ENCODE measurements at regions of chr5 and their contacts with region 1.

Region 1: GRCh38 chr5:90866333-90866732 is 307.7 kb downstream of the ADGRV1 start:
- DNase-seq: no peak
- H3K4me3 ChIP-seq: no peak overlapping the region
- H3K27ac ChIP-seq: no peak overlapping the region
- H3K4me1 ChIP-seq: no peaks in the 10 kb centered on the region
- H3K27me3 ChIP-seq: no peaks in the 10 kb centered on the region
- CTCF ChIP-seq: peak in 3 of 4 experiments; percentile 42 to 70 (median 59)
- POLR2A ChIP-seq: no peak

Region 2: GRCh38 chr5:90911169-90911568 is 44.8 kb after region 1 on chr5:
- intact Hi-C with region 1: no loop called
- DNase-seq: no peak
- H3K4me3 ChIP-seq: no peak overlapping the region
- H3K27ac ChIP-seq: no peak overlapping the region
- H3K4me1 ChIP-seq: no peaks in the 10 kb centered on the region
- H3K27me3 ChIP-seq: no peaks in the 10 kb centered on the region
- CTCF ChIP-seq: no peak
- POLR2A ChIP-seq: no peak

Region 3: DNA sequence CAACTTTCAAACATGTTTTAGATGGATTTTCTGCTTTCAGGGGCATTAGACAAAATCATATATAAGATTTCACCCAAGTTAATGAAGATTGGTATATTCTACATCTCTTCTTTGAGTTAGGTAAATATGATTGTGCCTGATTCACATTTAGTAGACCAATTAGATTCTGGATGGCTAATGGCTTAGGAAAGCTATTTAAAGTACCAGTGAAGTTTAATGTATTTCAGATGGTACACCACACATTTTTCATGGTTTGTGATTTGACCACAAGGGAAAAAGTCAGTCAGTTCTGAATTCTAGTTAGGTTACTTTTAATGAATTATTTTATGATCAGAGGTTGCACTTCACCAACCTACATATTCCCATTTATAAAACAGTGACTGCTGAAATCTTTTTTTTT is 102.0 kb after region 1 on chr5:
- intact Hi-C with region 1: no loop called
- DNase-seq: no peak
- H3K4me3 ChIP-seq: no peak overlapping the region
- H3K27ac ChIP-seq: no peak overlapping the region
- H3K4me1 ChIP-seq: no peaks in the 10 kb centered on the region
- H3K27me3 ChIP-seq: no peaks in the 10 kb centered on the region
- CTCF ChIP-seq: no peak
- POLR2A ChIP-seq: no peak

Region 4: DNA sequence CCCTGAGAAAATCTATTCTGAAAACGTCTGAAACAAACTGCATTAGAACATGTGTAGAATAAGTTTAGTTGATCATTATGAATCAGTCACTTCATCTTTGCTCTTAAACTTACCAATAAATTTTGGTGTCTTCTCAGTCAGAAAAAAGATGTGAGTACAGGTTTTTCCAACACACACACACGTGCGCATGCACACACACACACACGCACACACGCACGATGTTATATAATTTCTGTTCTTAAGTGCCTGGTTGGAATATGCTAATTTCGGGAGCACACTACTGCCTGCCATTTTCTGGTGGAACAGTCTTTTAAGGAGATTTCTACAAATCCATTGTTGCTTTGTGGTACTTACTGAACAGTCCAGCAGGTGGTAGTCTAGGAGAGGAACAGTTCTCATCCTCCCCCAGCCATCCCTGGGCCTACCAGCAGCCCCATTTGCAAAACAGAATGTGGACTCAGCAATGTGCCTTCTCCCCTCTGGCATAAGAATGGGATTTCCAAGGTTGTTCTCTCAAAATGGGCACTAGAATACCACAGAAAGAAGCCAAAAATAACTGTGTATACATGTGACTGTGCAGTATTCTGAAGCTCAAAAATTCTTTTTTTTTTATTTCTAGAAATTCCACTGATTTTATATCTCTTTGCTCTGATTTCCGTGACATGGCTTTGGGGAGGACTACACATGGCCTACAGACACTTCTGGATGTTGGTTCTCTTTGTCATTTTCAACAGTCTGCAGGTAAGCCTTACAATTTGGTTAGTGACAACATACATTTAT is 235.5 kb after region 1 on chr5:
- intact Hi-C with region 1: loop called (anchors 5 kb)
- DNase-seq: peak; percentile 76
- H3K4me3 ChIP-seq: no peak overlapping the region
- H3K27ac ChIP-seq: no peak overlapping the region
- H3K4me1 ChIP-seq: no peaks in the 10 kb centered on the region
- H3K27me3 ChIP-seq: no peaks in the 10 kb centered on the region
- CTCF ChIP-seq: peak; percentile 60 to 90 (median 86)
- POLR2A ChIP-seq: no peak

Region 5: GRCh38 chr5:91419571-91420537 is 553.5 kb after region 1 on chr5:
- intact Hi-C with region 1: loop called (anchors 5 kb)
- DNase-seq: peak; percentile 40
- H3K4me3 ChIP-seq: no peak overlapping the region
- H3K27ac ChIP-seq: no peak overlapping the region
- H3K4me1 ChIP-seq: no peaks in the 10 kb centered on the region
- H3K27me3 ChIP-seq: no peaks in the 10 kb centered on the region
- CTCF ChIP-seq: peak; percentile 69 to 91 (median 76)
- POLR2A ChIP-seq: no peak